GM10248 (cell line): ENCODE measurements at regions of chr6 and their contacts with region 1.

Region 1: DNA sequence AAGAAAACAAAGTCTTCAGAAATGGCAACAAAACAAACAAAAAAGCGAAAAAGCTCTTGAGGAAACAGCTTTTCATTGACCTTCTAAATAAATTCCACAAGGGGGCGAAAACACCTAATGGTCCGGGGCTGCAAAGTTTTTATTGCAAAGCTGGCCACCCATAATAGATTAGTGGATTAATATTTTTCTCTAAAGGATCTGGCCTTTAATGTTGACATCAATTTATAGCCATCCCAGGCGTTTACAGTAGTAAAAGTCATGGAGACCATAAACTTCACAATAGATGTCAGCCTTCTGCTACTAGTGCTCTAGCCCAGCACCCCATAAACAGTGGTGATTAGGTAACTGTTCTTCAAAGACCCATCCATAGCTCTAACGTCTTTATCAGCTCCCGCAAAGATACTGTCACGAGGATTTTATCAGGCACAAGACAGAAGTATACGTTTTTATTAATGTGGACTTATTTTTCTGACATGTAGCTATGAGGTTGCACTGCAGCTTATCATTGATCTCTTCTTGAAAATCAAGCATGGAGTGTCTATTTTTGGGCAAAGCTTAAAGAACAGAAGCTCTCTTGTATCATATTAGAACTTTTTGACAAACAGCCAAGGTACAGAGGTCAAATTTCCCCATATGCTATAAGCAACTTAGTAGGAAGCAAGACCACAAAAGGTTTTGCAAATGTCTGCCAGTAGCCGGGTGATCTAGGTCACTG is 4.7 kb downstream of the CITED2 start:
- DNase-seq: peak; percentile 33
- CTCF ChIP-seq: peak; percentile 57

Region 2: DNA sequence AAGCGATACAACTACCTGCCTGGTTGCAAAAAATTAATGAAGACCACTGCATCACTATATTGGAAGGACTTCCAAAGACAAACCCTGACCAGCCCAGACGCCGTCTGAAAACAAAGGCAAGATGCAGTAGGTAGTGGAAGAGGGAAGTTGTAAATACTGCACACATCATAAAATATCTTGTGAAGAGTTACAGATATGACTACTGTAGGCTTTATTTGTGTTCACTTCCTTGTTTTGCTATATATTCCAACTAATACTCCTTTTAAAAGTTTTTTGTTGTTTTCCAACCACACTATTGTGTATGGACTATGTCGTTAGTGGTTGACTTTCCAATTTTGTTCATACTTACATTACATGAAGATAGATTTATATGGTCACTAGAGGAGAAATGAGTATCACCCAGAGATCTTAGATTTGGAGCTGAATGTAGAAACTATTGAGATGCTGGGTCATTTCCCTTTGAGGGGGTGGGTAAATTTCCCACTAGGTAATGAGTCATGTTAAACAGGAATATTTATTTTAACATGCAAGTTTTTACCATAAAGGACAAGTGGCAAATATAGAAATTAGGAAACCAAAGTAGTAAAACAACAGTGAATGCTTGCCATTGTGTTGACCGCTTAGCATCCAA is 61.3 kb before region 1 on chr6:
- CTCF ChIA-PET with region 1: no interaction called
- POLR2A ChIA-PET with region 1: no interaction called
- DNase-seq: no peak
- CTCF ChIP-seq: no peak

Region 3: GRCh38 chr6:139355172-139355571 is 14.6 kb before region 1 on chr6:
- CTCF ChIA-PET with region 1: interaction called, 13 read pairs
- POLR2A ChIA-PET with region 1: interaction called, 3 read pairs
- DNase-seq: no peak
- CTCF ChIP-seq: no peak

Region 4: DNA sequence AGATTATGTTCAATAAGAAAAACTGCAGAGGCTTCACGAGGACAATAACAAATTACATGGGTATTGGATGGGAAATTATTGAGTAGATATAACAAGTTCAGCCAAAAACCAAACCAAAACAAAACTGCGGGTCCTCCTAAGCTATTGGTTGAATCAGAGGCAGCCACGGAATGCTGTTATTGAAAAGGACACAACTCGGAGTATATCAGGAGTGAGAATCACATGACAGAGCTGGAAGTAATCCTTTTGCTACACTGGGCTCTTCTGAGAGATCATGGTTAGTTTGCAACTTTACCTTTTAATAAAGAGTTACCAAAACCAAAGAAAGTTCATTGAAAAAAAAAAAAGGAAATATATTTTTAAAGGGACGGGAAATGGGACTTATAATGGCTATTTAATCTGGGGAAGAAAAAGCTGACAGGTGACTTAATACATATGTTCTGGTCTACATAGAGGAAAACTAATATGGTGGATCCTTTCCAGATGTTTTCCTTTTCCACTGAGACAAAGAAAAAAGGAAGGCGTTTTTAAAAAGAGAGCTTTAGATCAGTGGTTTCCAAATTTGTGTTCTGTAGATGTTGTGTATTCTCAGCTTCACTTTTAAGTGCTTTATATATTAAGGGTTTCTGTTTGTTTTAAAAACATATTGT is 11.6 kb after region 1 on chr6:
- CTCF ChIA-PET with region 1: interaction called, 33 read pairs
- POLR2A ChIA-PET with region 1: interaction called, 12 read pairs
- DNase-seq: no peak
- CTCF ChIP-seq: no peak

Region 5: DNA sequence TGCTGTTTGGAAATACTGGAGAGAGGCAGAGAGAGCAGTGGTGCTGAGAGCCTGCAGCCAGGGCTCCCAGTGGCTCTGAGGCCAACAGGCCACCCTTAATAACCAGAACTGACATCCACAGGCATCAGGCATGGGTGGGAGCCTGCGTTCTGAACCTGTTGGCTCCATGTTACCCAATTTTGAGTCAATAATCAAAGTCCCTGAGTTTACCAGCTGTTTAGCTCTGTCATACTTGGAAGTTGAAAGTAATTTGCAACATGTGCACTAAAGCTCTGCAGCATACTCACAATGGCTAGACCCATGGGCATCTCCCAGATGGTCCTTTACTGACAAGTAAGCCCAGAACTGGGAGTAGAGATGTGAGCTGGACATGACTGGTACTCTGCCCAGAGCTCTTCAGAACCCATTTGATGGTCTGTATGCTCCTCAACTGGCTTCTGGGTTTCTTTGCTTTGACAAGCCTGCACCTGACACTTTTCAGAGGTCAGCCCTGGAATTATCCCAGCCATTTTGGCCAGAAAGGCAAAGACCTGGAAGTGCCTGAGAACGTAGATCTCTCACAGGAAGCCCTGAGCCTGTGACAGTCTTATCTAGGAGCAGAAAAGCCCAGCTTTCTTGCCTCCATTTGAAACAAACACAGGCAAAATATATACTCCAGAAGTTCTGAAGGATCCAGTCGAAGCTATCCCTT is 127.1 kb after region 1 on chr6:
- CTCF ChIA-PET with region 1: no interaction called
- POLR2A ChIA-PET with region 1: no interaction called
- DNase-seq: no peak
- CTCF ChIP-seq: no peak

Region 6: GRCh38 chr6:140921366-140922226 is 1551.9 kb after region 1 on chr6:
- CTCF ChIA-PET with region 1: interaction called, 10 read pairs
- POLR2A ChIA-PET with region 1: no interaction called
- DNase-seq: peak; percentile 8
- CTCF ChIP-seq: peak; percentile 24